Activated CD4-positive, alpha-beta T cell treated with anti-CD3 and anti-CD28 coated beads for 36 hours (primary cell): ENCODE measurements at regions of chr1 and their contacts with region 1.

Region 1: DNA sequence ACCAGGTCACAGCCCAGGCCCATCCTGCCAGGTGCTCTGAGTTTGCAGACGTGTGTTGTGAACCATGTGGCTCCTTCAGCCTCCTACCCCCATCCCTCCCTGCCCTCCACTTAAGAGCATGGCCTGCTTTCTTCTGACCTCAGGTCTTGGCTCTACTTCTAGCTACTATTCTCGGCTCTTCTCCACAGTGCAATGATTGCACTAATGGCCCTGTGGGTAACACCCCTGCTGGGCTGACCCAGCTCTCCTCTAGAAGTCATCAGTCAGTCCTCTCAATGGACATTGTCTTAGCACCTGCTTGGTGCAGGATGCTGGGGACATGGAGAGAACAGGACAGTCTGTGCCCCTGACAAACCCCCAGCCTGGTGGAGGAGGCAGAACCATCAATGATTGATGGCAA is 22.2 kb upstream of the IFFO2 start:
- DNase-seq: no peak
- ATAC-seq: no peak
- H3K4me3 Mint-ChIP-seq: no peak overlapping the region
- H3K27ac Mint-ChIP-seq: no peak overlapping the region
- H3K4me1 Mint-ChIP-seq: peaks cover 2% of the 10 kb centered on the region
- H3K27me3 Mint-ChIP-seq: peaks cover 20% of the 10 kb centered on the region

Region 2: GRCh38 chr1:19029191-19030105 is 50.7 kb after region 1 on chr1:
- CTCF ChIA-PET with region 1: no interaction called
- POLR2A ChIA-PET with region 1: no interaction called
- intact Hi-C with region 1: loop called in 1 of 2 experiments (anchors 5 kb)
- DNase-seq: peak; percentile 24
- ATAC-seq: no peak
- H3K4me3 Mint-ChIP-seq: no peak overlapping the region
- H3K27ac Mint-ChIP-seq: no peak overlapping the region
- H3K4me1 Mint-ChIP-seq: peaks cover 3% of the 10 kb centered on the region
- H3K27me3 Mint-ChIP-seq: peaks cover 3% of the 10 kb centered on the region

Region 3: GRCh38 chr1:19044975-19045831 is 66.5 kb after region 1 on chr1:
- CTCF ChIA-PET with region 1: no interaction called
- POLR2A ChIA-PET with region 1: no interaction called
- intact Hi-C with region 1: no loop called
- DNase-seq: peak; percentile 5
- ATAC-seq: peak; percentile 56
- H3K4me3 Mint-ChIP-seq: no peak overlapping the region
- H3K27ac Mint-ChIP-seq: no peak overlapping the region
- H3K4me1 Mint-ChIP-seq: peaks cover 8% of the 10 kb centered on the region
- H3K27me3 Mint-ChIP-seq: peaks cover 7% of the 10 kb centered on the region

Region 4: GRCh38 chr1:19062258-19063029 is 83.7 kb after region 1 on chr1:
- CTCF ChIA-PET with region 1: no interaction called
- POLR2A ChIA-PET with region 1: no interaction called
- intact Hi-C with region 1: no loop called
- DNase-seq: peak; percentile 59
- ATAC-seq: peak; percentile 67
- H3K4me3 Mint-ChIP-seq: no peak overlapping the region
- H3K27ac Mint-ChIP-seq: no peak overlapping the region
- H3K4me1 Mint-ChIP-seq: no peaks in the 10 kb centered on the region
- H3K27me3 Mint-ChIP-seq: no peaks in the 10 kb centered on the region